Common myeloid progenitor, CD34-positive (primary cell): ENCODE measurements at regions of chr18 and their contacts with region 1.

Region 1: DNA sequence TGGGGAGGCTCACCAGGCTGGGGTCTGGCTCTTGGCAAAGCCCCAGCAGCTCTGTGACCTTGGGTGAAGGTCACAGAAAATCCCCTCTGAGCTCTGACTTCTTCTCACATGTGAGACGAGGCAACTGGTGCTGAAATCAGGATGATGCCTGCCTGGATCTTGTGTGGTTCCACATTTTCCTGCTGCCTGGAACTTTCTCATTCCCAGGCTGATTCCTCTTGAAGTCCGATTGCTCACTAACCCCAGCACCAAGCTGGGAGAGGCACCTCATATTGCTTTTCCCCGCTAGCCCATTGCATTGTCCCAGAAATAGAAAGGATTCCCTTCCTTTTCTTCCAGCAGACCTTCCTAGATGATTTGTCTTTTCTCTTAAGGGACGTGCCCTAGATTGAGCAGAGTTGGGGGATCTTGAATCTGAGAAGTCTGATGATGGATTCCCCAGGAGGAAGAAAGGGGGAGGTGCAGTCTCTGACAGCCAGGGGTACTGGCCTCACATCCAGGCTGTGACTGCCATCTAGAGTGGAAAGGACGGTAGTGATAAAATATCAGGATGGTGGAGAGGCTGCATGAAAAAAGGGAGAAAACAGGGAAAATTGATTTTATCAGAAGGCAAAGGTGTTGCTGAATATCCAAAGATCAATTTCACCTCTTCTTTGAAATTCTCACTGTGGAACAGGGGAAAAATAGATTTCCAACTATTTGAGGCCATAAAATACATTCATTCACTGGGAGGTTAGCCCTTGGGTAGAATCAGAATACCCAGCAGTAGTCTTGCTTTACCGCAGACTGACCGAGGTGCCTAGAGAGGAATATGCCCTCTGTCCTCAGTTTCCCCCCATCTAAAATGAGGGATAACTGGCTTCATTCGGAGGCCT is 96.3 kb downstream of the FAM210A start:
- DNase-seq: peak; percentile 75 to 85 (median 84)
- H3K4me3 ChIP-seq: no peak overlapping the region
- H3K27ac ChIP-seq: no peak overlapping the region
- H3K4me1 ChIP-seq: peaks cover 12 to 26% (median 15%) of the 10 kb centered on the region in 4 experiments
- H3K27me3 ChIP-seq: no peaks in the 10 kb centered on the region

Region 2: DNA sequence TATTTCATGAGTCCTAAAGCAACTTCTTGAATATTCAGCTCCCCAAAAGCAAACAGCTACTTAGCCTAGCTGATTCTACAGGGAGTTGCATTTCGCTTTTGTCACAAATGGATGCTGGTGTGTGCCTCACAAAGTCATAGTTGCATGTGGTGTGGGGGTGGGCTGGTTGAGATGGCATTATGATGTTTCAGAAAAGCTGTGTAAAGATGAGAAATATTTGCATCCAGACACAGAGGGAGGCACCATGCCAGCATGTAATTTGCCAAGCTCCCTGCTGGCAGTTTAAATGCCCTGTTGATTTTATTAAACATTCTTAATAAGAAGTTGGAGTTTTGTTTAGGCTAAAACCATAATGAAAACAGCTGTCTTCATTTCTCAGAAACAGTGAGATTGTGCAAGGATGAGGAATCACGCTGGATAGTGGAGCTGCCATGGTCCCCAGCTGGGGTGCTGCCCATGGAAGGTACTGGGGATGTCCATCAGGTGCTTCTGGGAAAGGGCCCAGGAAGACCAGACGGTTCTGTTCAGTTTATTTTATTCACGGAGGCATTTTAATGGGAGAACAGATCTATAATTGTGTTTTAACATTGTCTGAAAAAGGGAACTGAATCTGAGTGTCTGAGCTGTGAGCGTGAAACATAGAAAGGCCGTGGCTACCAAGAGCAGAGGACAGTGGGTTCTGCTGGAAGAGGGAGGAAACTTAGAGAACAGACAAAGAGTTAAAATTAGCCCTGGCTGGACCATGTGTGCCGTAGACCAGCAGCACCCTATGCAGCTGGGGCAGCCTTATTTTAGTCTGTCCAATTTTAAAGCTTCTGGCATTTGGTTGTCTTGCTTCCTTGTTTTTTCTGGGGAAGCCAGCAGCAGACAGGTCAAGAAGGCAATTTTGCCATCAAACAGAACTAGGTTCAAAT is 80.9 kb before region 1 on chr18:
- CTCF ChIA-PET with region 1: interaction called, 10 read pairs
- POLR2A ChIA-PET with region 1: no interaction called
- DNase-seq: peak in 1 of 3 donors; percentile 44
- H3K4me3 ChIP-seq: peak overlapping the region in 2 of 7 experiments; percentile 20 to 31
- H3K27ac ChIP-seq: no peak overlapping the region
- H3K4me1 ChIP-seq: peaks cover 2 to 31% (median 24%) of the 10 kb centered on the region in 4 experiments
- H3K27me3 ChIP-seq: no peaks in the 10 kb centered on the region

Region 3: DNA sequence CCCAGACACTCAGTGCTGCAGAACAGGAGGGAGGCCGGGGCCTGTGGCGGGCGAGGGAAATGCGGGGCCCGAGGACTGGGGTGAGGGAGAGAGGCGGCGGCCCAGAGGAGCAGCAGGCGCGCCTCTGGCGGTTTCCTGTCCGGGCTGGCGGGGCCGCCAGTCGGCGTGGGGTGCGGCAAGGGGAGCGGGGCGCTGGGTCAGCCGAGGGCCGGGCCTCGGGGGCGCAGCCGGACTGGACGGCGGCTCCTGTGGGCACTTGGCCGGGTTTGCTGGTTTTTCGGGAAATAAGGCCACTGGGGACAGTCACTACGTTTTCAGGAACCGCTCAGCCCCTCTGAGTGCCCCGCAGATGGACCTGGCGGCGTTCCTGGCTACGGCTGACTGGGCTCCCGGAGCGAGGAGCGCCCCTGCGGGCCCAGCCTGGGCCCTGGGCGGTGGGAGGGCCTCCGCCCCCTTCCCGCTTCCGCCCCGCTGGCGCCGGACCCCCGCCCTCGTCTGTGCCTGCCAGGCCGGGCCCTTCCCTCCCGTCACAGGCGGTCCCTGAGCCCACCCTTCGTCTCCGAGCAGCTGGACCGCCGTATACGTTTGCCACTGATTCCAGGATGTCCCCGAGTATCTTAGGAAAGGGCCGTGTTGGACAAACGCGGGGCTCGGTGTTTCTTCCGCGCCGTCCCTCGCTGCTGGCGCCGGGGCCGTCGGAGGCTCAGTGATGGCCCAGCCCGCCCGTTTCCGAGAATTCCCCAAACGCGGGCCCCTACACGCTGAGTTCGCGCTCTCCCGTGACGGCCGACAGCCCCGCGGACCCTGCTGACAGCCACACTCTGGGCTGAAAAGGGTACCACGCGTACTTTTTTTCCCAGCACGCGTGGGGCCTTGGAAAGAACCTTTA is 11.7 kb after region 1 on chr18:
- CTCF ChIA-PET with region 1: no interaction called
- POLR2A ChIA-PET with region 1: no interaction called
- DNase-seq: peak; percentile 18 to 61 (median 46)
- H3K4me3 ChIP-seq: peak overlapping the region in 6 of 7 experiments; percentile 22 to 78 (median 54)
- H3K27ac ChIP-seq: no peak overlapping the region
- H3K4me1 ChIP-seq: peaks cover 0 to 17% (median 7%) of the 10 kb centered on the region in 4 experiments
- H3K27me3 ChIP-seq: no peaks in the 10 kb centered on the region